Caco-2 (cell line): ENCODE measurements at regions of chr1 and their contacts with region 1.

Region 1: DNA sequence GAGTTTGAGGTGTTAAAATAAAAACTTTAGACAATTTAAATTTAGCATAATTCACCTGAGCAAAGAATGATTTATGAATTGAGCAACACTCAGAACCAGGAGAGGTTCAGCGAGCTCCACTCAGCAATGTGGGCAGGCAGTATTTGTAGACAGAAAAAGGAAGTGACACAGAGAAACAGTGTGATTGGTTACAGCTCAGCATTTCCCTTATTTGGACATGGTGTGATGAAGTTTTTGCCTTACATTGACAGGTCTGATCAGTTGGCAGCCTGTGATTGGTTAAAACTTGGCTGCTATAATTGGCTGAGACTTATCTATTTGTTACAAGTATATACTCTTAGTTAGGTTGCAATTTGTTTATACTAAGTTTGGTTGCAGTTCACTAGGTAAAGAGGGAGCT is 621.2 kb upstream of the PRMT6 start:
- DNase-seq: no peak
- H3K4me3 ChIP-seq: no peak overlapping the region
- H3K4me3 Mint-ChIP-seq: no peak overlapping the region
- H3K27ac Mint-ChIP-seq: no peak overlapping the region
- H3K4me1 ChIP-seq: no peaks in the 10 kb centered on the region
- H3K4me1 Mint-ChIP-seq: no peaks in the 10 kb centered on the region
- H3K27me3 ChIP-seq: no peaks in the 10 kb centered on the region
- H3K27me3 Mint-ChIP-seq: no peaks in the 10 kb centered on the region
- CTCF ChIP-seq: no peak

Region 2: GRCh38 chr1:106526650-106527049 is 91.4 kb after region 1 on chr1:
- CTCF ChIA-PET with region 1: no interaction called
- POLR2A ChIA-PET with region 1: no interaction called
- intact Hi-C with region 1: no loop called
- DNase-seq: no peak
- H3K4me3 ChIP-seq: no peak overlapping the region
- H3K4me3 Mint-ChIP-seq: no peak overlapping the region
- H3K27ac Mint-ChIP-seq: no peak overlapping the region
- H3K4me1 ChIP-seq: no peaks in the 10 kb centered on the region
- H3K4me1 Mint-ChIP-seq: no peaks in the 10 kb centered on the region
- H3K27me3 ChIP-seq: no peaks in the 10 kb centered on the region
- H3K27me3 Mint-ChIP-seq: no peaks in the 10 kb centered on the region
- CTCF ChIP-seq: no peak

Region 3: DNA sequence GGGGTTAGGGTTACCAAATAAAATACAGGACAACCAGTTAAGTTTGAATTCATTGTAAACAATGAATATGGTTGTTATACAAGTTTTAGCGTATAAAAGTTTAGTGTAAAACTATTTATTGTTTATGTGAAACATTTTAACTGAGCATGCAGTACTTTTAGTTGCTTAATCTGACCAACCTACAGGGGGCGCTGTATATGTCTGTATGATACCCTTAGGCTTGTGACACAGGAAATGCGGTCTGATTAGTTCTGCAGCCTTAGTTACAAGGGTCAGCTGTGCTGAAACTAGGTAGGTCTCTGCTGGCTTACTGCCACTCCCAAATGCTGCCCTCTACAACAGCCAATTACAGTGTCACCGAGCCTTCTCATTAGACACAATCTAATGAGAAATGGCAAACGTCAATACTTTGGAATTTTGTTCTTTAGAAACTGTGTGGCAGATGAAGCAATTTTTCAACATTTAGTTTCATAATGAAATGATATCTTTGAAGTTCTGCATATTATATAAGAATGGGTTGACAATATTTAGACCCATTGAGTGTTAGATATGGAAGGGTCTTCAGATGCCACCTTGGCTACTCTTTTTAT is 761.8 kb after region 1 on chr1:
- CTCF ChIA-PET with region 1: no interaction called
- POLR2A ChIA-PET with region 1: no interaction called
- intact Hi-C with region 1: loop called (anchors 5 kb)
- DNase-seq: peak in 1 of 2 experiments; percentile 9
- H3K4me3 ChIP-seq: no peak overlapping the region
- H3K4me3 Mint-ChIP-seq: no peak overlapping the region
- H3K27ac Mint-ChIP-seq: no peak overlapping the region
- H3K4me1 ChIP-seq: no peaks in the 10 kb centered on the region
- H3K4me1 Mint-ChIP-seq: peaks cover 10% of the 10 kb centered on the region
- H3K27me3 ChIP-seq: no peaks in the 10 kb centered on the region
- H3K27me3 Mint-ChIP-seq: no peaks in the 10 kb centered on the region
- CTCF ChIP-seq: no peak